PC-9 (cell line): ENCODE measurements at regions of chr19 and their contacts with region 1.

Region 1: GRCh38 chr19:12777217-12778016 is 2.1 kb upstream of the HOOK2 start:
- DNase-seq: peak; percentile 63 to 85
- H3K4me3 ChIP-seq: peak overlapping the region; percentile 59
- H3K27ac ChIP-seq: peak overlapping the region; percentile 51
- H3K4me1 ChIP-seq: peaks cover 54% of the 10 kb centered on the region
- H3K27me3 ChIP-seq: no peaks in the 10 kb centered on the region
- CTCF ChIP-seq: peak; percentile 99

Region 2: GRCh38 chr19:11242864-11243797 is 1534.3 kb before region 1 on chr19:
- CTCF ChIA-PET with region 1: no interaction called
- POLR2A ChIA-PET with region 1: no interaction called
- intact Hi-C with region 1: no loop called
- DNase-seq: peak; percentile 60 to 89
- H3K4me3 ChIP-seq: no peak overlapping the region
- H3K27ac ChIP-seq: no peak overlapping the region
- H3K4me1 ChIP-seq: no peaks in the 10 kb centered on the region
- H3K27me3 ChIP-seq: no peaks in the 10 kb centered on the region
- CTCF ChIP-seq: peak; percentile 91

Region 3: DNA sequence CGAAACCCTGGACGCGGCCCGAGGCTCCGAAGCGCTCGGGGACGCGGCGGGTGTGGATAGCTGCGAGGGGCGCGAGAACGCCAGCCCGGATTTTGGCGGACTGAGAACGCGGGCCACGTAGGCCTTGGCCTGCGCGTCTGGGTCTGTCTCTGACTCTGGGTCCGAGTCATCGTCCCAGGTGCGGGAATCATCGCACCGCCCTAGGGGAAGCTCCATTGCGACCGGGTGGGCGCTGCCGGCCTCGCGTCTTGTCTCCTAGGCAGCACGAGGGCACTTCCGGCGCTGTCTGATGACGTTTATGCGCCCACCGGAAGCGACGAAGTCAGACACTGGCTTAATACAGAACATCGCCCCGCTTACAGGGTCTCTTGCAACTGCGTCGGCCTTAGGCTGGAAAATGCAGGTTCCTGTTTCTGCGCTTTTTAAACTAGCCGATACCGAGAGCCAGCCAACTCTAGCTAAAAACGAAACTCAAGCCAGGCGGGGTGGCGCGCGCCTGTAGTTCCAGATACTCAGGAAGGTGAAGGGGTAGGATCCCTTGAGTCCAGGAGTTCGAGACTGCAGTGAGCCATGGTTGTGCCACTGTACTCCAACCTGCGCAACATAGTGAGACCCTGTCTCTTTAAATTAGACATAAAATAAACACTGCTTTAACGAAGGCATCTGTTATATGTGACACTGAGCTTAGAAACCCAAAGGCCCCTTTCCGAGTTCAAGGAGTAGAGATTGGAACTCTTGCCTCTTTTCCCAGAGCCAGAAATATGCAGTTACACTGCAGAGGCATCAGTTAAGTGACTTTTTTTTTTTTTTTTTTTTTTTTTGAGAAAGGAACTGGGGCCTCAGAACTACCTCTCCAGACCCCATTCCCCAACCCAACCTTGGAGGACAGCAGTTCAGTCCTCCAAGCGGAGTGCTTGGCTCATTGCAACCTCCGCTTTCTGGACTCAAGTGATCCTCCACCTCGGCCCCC is 80.8 kb before region 1 on chr19 and contains the start of gene FBXW9:
- CTCF ChIA-PET with region 1: no interaction called
- POLR2A ChIA-PET with region 1: no interaction called
- intact Hi-C with region 1: no loop called
- DNase-seq: peak; percentile 90 to 91
- H3K4me3 ChIP-seq: peak within 1 kb of the TSS; percentile 72
- H3K27ac ChIP-seq: peak within 1 kb of the TSS; percentile 48
- H3K4me1 ChIP-seq: peaks cover 8% of the 10 kb centered on the region; the same call in 1 of the 2 replicates
- H3K27me3 ChIP-seq: no peaks in the 10 kb centered on the region
- CTCF ChIP-seq: no peak
- total RNA-seq, gene FBXW9: 21.0 and 21.9 TPM in 2 replicates

Region 4: GRCh38 chr19:12840091-12841079 is 63.0 kb after region 1 on chr19:
- CTCF ChIA-PET with region 1: no interaction called
- POLR2A ChIA-PET with region 1: no interaction called
- intact Hi-C with region 1: loop called (anchors 2 kb)
- DNase-seq: peak; percentile 85 to 97
- H3K4me3 ChIP-seq: peak overlapping the region; percentile 49; the same call in 1 of the 2 replicates
- H3K27ac ChIP-seq: no peak overlapping the region
- H3K4me1 ChIP-seq: peaks cover 13% of the 10 kb centered on the region
- H3K27me3 ChIP-seq: no peaks in the 10 kb centered on the region
- CTCF ChIP-seq: no peak

Region 5: GRCh38 chr19:12872941-12873890 is 95.8 kb after region 1 on chr19:
- CTCF ChIA-PET with region 1: interaction called, 15 read pairs
- POLR2A ChIA-PET with region 1: no interaction called
- intact Hi-C with region 1: no loop called
- DNase-seq: peak; percentile 70 to 93
- H3K4me3 ChIP-seq: peak overlapping the region; percentile 38; the same call in 1 of the 2 replicates
- H3K27ac ChIP-seq: no peak overlapping the region
- H3K4me1 ChIP-seq: no peaks in the 10 kb centered on the region
- H3K27me3 ChIP-seq: no peaks in the 10 kb centered on the region
- CTCF ChIP-seq: 0 out of 2 replicates have a peak, but pooled peaks have one; percentile 13